Right ventricle myocardium superior (tissue), 1 donor: ENCODE measurements at regions of chr19 and their contacts with region 1.

Region 1: DNA sequence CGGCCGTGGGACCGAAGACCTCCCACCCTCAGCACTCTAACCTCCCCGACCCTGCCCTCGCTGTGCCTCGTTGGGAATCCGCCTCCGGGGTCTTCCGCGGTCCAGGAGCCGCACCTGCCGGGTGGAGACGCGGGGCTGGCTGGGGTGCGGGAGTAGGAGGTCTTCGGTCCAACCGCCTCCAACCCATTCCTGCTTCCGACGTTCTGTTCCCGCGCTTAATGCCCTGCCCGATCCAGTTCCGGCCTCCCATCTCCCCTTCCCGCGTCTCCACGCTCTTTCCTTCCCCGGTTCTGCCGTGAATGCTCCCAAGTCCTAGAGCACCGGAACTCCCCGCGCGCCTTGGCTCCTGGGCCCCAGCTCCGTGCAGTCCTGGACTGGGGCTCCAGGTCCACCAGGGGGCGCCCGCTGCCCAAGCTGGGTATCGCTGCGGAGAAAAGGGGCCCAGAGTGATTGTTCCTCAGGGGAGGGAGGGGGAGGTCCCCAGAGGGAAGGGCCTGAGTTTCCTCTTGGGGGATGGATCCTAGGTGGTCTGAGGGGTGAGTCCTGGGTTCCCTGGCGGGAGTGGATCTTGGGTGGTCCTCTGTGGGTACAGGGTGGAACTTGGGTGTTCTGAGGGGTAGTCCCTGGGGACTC is 14.1 kb upstream of the TNFSF9 start:
- DNase-seq: peak; percentile 94
- ATAC-seq: peak; percentile 96

Region 2: GRCh38 chr19:6632002-6632621 is 115.3 kb after region 1 on chr19:
- intact Hi-C with region 1: loop called (anchors 5 kb)
- DNase-seq: no peak
- ATAC-seq: peak; percentile 77